ENCODE measurements at regions of chr11 and their contacts with region 1.

Region 1: DNA sequence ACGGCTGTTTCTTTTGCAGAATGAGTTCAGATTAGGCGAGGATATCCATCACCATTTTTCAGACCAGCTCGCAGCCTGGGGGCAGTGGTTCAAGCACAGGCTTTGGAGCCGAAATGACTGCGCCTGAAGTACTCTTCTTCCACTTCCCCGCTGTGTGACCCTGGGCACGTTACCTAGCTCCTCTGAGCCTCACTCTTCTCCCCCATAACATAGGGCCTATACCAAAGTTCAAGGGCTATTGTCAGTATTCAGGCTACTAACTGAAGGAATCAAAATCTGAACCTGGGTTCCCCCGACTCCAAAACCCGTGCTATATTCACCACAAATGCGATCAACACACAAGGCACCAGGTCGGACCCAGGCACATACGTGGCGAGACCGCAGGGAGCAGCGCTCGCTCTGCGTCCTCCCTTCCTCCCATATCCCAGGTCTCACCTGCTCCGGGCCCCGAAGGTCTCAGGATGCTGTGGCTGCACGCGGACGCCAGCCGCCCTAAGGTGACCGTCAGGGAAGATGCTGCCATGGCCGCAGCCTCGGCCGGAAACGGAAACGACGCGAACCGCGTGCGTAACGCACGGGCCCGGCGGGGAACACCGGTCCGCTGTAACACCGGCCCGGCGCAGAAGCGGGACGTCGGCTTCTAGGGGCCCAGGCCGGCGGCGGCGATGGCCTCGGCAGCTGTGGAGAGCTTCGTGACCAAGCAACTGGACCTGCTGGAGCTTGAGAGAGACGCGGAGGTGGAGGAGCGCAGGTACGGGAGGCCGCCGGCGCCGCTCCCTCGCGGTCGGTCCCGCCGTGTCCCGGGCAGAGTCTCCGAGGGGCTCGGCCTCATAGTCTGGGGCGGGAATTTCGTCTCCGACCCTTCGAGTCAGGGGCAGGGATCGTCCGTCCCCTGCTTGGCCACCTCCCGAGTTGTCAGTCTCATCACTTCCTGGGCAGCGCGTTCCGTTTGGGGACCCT is at the starts of genes IGHMBP2 and MRPL21:
- DNase-seq: peak; percentile 87
- ATAC-seq: peak; percentile 96
- H3K4me3 Mint-ChIP-seq: peak within 1 kb of the TSS; percentile 97
- H3K27ac Mint-ChIP-seq: peak within 1 kb of the TSS; percentile 82
- H3K4me1 Mint-ChIP-seq: peaks cover 44% of the 10 kb centered on the region
- H3K27me3 Mint-ChIP-seq: no peaks in the 10 kb centered on the region
- CTCF ChIP-seq: no peak
- total RNA-seq, gene IGHMBP2: 24.2 and 33.8 TPM in 2 replicates
- total RNA-seq, gene MRPL21: 49.9 and 60.0 TPM in 2 replicates

Region 2: DNA sequence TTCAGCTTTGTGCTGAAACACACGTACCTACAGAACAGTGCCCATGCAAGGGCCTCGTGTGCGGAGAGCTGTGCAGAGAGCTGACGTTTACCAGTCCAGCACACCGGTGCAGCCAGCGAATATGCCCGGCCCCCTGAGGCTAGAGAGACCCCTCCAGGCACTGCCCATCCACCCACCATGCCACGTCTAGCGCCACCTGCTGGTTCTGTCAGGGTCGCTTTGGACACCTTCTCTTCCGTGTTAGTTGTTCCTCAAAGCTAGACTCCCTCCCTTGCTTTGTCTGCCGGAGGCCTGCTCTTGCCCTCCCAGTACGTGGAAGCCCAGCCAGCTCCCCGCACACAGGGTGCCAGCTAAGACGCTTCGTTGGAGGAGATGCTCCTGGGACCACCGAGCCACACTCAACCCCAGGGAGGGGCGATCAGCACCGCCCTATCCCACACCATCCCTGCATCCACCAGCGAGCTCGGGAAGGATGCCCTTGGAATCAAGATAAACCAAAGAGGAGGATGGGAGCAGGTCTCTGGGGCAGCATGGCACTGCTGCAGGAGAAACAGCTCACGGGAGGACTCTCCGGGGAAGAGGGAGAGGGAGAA is 105.3 kb before region 1 on chr11:
- CTCF ChIA-PET with region 1: no interaction called
- POLR2A ChIA-PET with region 1: no interaction called
- intact Hi-C with region 1: no loop called
- DNase-seq: no peak
- ATAC-seq: peak; percentile 28
- H3K4me3 Mint-ChIP-seq: no peak overlapping the region
- H3K27ac Mint-ChIP-seq: no peak overlapping the region
- H3K4me1 Mint-ChIP-seq: no peaks in the 10 kb centered on the region
- H3K27me3 Mint-ChIP-seq: no peaks in the 10 kb centered on the region
- CTCF ChIP-seq: no peak

Region 3: GRCh38 chr11:69048718-69049489 is 145.3 kb after region 1 on chr11 and contains the start of gene TPCN2:
- CTCF ChIA-PET with region 1: interaction called, 3 read pairs
- POLR2A ChIA-PET with region 1: no interaction called
- intact Hi-C with region 1: loop called (anchors 5 kb)
- DNase-seq: peak; percentile 89
- ATAC-seq: peak; percentile 99
- H3K4me3 Mint-ChIP-seq: peak within 1 kb of the TSS; percentile 81
- H3K27ac Mint-ChIP-seq: peak within 1 kb of the TSS; percentile 70
- H3K4me1 Mint-ChIP-seq: peaks cover 47% of the 10 kb centered on the region
- H3K27me3 Mint-ChIP-seq: peaks cover 8% of the 10 kb centered on the region
- CTCF ChIP-seq: no peak
- total RNA-seq, gene TPCN2: 29.1 and 35.4 TPM in 2 replicates

Region 4: DNA sequence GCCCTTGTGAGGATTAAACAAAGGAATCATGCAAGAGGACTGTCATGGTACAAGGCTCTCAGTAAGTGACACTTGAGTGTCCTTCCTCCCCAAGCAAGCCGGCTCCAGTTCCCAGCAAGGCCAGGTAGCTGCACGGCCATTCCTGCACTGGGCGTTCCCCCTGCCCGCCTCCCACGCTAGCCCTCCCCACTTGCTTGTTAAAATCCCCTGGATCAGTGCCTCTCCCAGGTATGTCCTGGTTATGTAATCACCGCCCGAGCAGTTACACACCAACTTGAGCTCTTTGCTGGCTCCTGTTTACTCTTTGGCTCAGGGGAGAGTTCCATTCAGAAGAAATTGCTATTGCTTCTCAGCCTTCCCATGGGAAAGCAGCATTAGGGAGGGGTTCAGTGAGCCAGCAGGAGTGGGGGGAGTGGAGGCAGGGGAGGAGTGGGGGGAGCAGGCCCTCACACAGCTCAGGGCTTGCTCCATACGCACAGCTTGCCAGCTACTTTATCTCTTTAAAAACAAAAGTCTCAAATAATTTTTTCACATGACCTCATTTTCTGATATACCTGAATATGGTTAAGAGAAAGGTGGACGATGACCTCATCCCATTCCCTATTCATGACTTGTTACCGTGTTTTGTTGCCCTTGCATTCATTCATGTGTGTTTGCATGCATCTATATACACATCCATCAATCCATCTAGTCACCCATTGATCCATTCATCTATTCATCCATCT is 371.1 kb after region 1 on chr11:
- CTCF ChIA-PET with region 1: no interaction called
- POLR2A ChIA-PET with region 1: no interaction called
- intact Hi-C with region 1: no loop called
- DNase-seq: no peak
- ATAC-seq: no peak
- H3K4me3 Mint-ChIP-seq: no peak overlapping the region
- H3K27ac Mint-ChIP-seq: no peak overlapping the region
- H3K4me1 Mint-ChIP-seq: peaks cover 5% of the 10 kb centered on the region
- H3K27me3 Mint-ChIP-seq: no peaks in the 10 kb centered on the region
- CTCF ChIP-seq: no peak